Head of caudate nucleus (tissue), 42 donors: ENCODE measurements at regions of chr10 and their contacts with region 1.

Region 1: DNA sequence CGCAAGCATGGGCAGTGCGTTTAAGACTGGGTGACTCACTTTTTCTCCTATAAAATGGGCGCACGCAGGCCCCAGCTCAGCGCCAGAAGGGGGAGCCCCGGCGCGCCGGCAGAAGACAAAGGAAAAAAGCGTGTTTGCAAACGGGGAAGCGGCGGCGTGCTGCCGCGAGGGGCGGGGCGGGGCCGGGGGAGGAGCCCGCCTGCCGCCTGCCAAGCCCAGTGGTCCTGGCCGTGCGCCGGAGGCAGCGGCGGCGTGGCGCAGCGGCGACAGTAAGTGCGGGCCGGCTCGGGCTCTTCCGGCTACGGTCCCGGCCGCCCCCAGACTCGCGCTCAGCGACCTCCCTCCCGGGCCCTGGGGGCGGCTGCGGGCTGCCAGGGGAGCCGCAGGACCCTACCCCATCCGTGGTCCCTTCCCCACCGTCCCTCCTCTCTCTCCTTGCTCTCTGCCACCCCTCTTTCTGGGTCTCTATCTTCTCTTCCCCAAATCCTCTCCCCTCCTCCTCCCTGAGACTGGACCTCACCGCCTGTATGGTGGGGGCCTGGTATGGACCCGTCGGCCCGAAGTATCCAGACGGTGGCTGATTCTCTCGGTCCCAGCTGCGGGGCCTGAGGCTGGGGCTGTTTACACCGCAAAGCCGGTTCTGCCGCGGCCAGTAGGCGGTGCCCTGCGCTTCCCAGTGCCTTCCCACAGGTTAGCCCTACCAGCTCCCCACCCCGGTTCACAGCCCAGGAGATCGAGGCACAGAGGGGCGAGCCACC is at the start of gene SLC29A3:
- DNase-seq: peak; percentile 71 to 91 (median 83)

Region 2: GRCh38 chr10:70634011-70634410 is 685.2 kb before region 1 on chr10:
- intact Hi-C with region 1: no loop called
- DNase-seq: no peak

Region 3: GRCh38 chr10:71278691-71279588 is 40.3 kb before region 1 on chr10:
- intact Hi-C with region 1: no loop called
- DNase-seq: peak; percentile 18 to 85 (median 64)

Region 4: DNA sequence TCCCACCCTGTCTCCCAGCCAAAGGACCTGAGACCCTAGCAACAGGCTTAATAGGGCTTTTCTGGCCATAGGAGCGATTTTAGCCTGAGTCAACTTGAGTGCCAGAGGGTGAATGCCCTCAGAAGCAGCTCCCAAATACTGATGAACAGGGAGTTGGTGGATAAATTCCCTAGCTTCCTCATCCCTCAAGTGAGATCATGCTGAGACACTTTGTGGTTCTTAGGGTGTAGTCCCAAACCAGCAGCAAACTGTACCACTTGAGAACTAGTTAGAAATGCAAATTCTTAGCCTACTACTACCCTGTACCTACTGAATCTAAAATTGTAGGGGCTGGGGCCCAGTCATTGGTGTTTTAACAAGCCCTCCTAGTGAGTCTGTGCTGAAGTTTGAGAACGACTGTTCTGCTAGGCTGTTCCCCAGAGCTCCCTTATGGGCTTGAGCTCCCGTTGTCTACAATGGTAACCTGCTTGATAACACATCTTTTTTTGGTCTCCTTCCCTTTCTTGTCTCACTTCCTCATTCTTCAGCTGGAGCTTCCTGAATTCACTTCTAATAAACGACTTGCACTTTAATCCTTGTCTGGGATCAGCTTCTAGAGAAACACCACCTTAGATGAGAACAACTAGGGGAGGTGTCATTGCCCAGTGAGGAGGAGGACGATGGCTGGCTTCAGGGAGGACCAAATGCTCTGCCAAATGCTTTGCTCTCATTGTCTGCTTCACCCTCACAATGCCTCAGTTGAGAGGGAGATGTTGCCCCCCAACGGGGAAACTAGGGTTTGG is 59.3 kb after region 1 on chr10:
- intact Hi-C with region 1: loop called (anchors 2 kb)
- DNase-seq: no peak

Region 5: DNA sequence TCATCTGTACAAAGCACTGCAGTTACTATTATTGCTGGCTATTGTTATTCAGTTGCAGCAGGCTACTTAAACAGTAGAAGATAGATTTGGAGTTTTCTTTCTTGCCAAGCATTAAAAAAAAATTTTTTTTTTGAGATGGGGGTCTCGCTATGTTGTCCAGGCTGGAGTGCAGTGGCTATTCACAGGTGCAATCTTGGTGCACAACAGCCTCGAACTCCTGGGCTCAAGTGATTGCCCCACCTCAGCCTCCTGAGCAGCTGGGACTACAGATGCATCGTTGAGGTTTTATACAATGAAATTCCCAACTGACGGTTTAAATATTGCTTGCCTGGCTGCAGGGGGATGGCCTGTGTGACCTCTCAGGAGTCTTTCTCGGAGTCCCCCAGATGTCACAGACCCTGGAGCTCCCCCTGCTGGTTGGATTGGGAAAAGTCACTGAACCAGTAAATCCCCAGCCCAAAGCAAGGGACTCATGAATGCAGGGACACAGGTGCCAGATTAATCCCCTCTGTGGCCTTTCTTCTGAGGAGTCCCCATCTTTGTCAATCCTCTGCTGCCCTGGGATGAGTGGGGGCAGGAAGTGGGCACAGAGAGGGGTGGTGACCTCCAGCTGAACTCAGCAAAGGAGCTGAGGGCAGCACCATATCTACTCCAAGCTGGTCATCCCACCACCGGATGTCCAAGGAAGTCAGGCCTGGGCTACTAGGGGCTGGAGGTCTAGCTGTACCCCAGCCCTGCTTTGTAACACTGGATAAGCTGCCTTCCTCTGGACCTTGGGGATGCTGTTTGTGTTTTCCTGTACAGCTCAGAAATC is 250.8 kb after region 1 on chr10:
- intact Hi-C with region 1: loop called (anchors 5 kb)
- DNase-seq: peak; percentile 55 to 95 (median 86)

Region 6: GRCh38 chr10:71671994-71672946 is 353.0 kb after region 1 on chr10:
- intact Hi-C with region 1: no loop called
- DNase-seq: no peak

Region 7: GRCh38 chr10:71708301-71708703 is 389.1 kb after region 1 on chr10:
- intact Hi-C with region 1: loop called (anchors 5 kb)
- DNase-seq: peak; percentile 57 to 91 (median 77)

Region 8: GRCh38 chr10:71812016-71812912 is 493.0 kb after region 1 on chr10:
- intact Hi-C with region 1: loop called (anchors 10 kb)
- DNase-seq: peak; percentile 62 to 90 (median 81)

Region 9: GRCh38 chr10:72340510-72341261 is 1021.5 kb after region 1 on chr10:
- intact Hi-C with region 1: no loop called
- DNase-seq: peak in 41 of 42 donors; percentile 50 to 88 (median 74)